Psoas muscle (tissue), 8 donors: ENCODE measurements at regions of chr2 and their contacts with region 1.

Region 1: GRCh38 chr2:159030674-159031380 is 62.4 kb downstream of the TANC1 start:
- DNase-seq: peak in 1 of 2 donors; percentile 23
- ATAC-seq: peak; percentile 77 to 92 (median 84)
- H3K4me3 ChIP-seq: no peak overlapping the region
- H3K27ac ChIP-seq: peak overlapping the region; percentile 73
- H3K4me1 ChIP-seq: peaks cover 25% of the 10 kb centered on the region
- H3K27me3 ChIP-seq: no peaks in the 10 kb centered on the region
- CTCF ChIP-seq: no peak

Region 2: DNA sequence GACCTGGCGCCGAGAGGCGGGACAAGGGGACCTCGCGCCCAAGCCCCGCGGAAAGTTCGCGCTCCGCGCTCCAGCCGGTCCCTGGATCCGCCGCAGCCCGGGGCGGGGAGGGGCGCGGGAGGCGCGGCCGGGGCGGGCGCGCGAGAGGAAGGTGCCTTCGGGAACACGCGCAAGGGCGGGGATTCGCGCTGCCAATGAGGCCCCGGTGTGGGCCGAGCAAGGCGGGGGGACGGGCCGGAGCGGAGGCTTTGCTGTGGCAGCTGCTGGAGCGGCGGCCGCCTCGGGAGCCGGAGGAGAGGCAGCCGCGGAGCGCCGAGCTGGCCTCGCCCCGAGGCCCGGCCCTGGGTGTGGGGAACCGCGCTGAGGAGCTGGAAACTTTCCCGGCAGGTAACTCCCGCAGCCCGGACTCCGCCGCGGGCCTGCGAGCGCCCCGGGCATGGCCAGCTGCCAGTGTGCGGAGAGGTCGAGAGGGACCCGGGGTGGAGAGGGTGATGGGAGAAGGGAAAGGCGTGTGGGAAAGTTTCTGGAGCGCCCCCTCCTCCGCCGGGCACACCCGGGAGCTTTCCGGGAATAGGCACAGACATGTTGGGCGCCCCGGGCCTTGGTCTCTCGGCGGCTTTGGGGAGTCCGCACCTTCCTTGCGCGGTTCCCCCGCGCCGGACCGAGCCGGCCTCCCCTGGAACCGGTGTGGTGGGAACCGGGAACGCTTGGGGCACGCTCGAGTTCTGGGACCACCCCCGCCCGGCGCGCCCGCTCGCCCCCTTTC is 62.2 kb before region 1 on chr2 and contains the start of gene TANC1:
- intact Hi-C with region 1: loop called in 1 of 2 experiments (anchors 5 kb)
- DNase-seq: peak; percentile 91 to 93
- ATAC-seq: peak; percentile 96 to 97 (median 97)
- H3K4me3 ChIP-seq: peak within 1 kb of the TSS; percentile 74
- H3K27ac ChIP-seq: peak within 1 kb of the TSS; percentile 58
- H3K4me1 ChIP-seq: no peaks in the 10 kb centered on the region
- H3K27me3 ChIP-seq: no peaks in the 10 kb centered on the region
- CTCF ChIP-seq: no peak
- total RNA-seq, gene TANC1: 3.2 to 7.5 (median 4.8) TPM

Region 3: GRCh38 chr2:159086342-159086741 is 55.5 kb after region 1 on chr2:
- intact Hi-C with region 1: loop called in 1 of 2 experiments (anchors 5 kb)
- DNase-seq: peak in 1 of 2 donors; percentile 20
- ATAC-seq: no peak
- H3K4me3 ChIP-seq: no peak overlapping the region
- H3K27ac ChIP-seq: no peak overlapping the region
- H3K4me1 ChIP-seq: peaks cover 19% of the 10 kb centered on the region
- H3K27me3 ChIP-seq: no peaks in the 10 kb centered on the region
- CTCF ChIP-seq: no peak